AG04449 (cell line): ENCODE measurements at regions of chr3 and their contacts with region 1.

Region 1: DNA sequence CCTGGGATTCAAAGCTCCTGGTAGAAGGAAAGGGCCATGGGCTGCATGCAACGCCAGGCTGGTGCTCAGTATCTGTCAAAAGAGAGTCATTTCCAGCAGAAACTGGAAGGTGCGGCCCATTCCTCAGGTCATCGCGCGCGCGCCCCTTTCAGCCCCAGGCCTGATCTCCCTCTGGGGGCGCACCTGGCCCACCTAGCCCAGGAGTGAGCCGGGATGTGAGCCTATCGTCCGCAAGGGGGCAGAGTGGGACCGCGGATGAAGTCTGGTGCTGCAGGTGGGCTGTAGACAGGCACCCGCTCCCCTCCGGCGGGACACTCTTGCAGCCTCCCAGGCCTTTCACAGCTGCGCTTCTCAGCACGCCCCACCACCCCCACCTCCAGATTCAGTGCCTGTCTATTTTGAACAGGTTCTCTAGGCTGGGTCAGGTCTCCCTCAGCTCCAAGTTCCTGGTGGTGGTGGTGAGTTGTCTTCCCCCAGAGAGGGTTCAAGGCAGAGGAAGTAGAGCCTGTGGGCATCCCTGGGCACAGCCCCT is 5.8 kb upstream of the RPL29 start:
- DNase-seq: no peak
- H3K4me3 ChIP-seq: no peak overlapping the region
- CTCF ChIP-seq: peak; percentile 96

Region 2: DNA sequence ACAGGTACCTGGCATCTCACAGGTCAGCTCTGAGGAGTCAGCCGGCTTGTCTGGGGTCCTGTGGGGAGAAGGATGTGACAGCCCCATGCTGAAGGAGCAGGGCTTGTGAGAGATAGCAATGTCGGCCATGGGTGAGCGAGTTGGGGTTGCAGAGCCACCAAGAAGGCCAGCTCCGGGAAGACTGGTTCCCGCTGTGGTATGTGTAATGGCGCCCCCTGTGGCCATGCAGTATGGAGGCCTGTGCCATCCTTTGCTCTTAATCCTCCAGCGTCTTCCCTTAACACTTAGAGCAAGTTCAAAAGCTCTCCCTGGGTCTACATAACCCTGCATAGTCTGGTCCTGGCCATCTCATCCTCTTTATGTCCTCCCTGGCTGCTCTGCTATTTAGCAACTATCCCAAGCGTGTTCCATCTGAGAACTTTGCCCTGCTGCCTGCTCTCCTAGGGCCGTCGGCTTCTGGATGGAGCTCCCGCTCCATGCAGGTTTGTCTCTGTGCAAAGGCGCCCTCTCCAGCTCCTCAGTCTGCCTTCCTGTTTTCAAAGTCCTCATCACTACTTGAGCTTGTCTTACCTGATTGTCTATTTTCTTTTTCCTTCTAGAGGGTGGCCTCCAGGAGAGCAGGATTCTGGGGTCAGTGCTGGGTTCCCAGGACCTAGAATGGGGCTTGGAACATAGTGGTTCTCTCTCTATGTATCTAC is 181.7 kb before region 1 on chr3:
- CTCF ChIA-PET with region 1: no interaction called
- POLR2A ChIA-PET with region 1: no interaction called
- DNase-seq: no peak
- H3K4me3 ChIP-seq: no peak overlapping the region
- CTCF ChIP-seq: no peak

Region 3: DNA sequence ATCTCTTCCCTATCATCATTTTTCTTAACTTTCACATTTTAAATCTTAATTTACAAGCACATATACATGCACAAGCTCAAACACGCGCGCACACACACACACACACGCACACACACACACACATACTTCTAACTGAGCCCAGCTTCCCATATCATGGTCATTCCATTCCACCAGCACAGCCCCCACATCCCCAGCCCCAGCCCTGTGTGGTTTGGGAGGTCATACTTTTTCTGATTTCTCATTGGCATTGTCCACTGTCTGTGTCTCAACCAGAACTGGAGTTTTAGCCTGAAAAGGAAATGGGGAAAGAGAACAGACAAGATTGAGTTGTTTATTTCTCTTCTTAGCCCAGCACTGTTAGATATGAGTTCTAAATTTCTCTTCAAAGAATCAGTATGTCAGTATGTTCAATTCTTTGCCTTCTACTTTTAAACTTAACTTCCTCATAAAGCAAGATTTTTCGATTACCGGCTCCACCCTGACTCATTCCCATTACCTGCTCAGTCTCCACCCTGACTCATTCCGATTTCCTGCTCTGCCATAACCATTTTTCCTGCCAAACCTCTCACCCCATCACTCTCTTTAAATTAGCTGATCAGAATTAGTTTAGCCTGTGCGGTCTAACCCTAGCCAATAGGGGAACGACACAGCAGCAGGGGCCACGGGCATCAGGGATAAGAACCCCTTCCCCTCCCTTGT is 104.8 kb before region 1 on chr3:
- CTCF ChIA-PET with region 1: no interaction called
- POLR2A ChIA-PET with region 1: no interaction called
- DNase-seq: no peak
- H3K4me3 ChIP-seq: no peak overlapping the region
- CTCF ChIP-seq: no peak

Region 4: DNA sequence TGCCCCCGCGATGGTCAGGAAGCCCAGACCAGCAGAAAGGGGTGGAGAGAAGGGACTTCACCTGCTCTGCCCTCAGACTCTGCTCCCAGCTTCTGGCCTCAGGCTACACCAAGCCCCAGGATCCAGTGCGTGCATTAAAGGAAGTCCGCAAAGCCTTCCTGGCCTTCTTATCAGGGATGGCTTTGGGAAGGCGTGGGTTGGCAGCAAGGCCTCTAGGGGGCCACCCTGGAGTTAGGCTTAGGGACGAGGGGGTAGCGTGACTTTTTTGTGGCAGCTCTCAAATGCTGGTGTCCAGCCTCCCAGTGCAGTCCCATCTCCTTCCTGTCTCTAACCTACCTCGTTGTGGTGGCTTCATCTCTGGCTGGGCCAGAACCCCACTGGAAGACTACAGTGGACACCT is 13.1 kb after region 1 on chr3:
- CTCF ChIA-PET with region 1: interaction called, 99 read pairs
- POLR2A ChIA-PET with region 1: no interaction called
- DNase-seq: no peak
- H3K4me3 ChIP-seq: no peak overlapping the region
- CTCF ChIP-seq: peak; percentile 49

Region 5: DNA sequence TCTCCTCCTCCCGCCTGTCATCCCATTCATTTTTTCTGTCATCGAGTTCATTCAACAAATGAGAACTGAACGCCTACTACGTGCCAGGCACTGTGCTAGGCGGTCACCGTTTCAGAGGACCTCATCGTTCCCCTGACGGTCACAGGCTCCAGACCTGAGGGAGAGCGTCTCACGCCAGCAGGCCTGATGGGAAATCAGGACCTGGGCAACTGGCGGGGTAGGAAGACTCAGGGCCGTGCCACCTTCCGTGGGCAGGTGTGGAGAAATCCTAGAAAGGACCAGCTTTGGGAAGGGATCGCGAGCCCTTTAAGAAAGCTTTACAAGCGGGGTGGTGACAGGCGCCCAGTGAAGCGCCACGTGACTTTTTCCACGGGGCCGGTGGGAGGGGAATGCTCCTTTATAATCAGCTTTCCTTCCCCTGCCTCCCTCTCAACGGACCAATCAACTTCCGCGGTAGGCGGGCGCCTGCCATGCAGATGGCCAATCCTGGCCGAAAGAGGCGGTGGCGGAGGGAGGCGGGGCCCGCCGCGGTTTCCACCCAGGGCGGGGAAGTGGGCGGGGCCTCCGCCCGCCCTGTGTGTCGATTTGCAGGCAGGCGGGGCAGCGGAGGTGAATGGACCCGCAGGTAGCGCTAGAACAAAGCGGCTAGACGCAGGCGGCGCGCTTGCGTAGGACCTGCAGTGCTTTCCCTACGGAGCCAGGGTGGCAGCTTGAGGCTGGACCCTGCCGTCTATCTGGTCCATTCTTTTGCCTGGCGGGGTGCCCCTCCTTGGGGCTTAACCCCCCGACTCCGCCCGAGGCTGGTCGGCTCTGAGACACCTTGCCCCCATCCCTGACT is 55.7 kb after region 1 on chr3:
- CTCF ChIA-PET with region 1: interaction called, 160 read pairs
- POLR2A ChIA-PET with region 1: interaction called, 8 read pairs
- DNase-seq: peak; percentile 86
- H3K4me3 ChIP-seq: peak overlapping the region; percentile 72
- CTCF ChIP-seq: no peak

Region 6: GRCh38 chr3:52123106-52123725 is 121.7 kb after region 1 on chr3:
- CTCF ChIA-PET with region 1: interaction called, 779 read pairs
- POLR2A ChIA-PET with region 1: no interaction called
- DNase-seq: no peak
- H3K4me3 ChIP-seq: no peak overlapping the region
- CTCF ChIP-seq: peak; percentile 98

Region 7: GRCh38 chr3:52154117-52155094 is 152.9 kb after region 1 on chr3 and contains the start of gene POC1A:
- CTCF ChIA-PET with region 1: interaction called, 725 read pairs
- POLR2A ChIA-PET with region 1: interaction called, 4 read pairs
- DNase-seq: peak; percentile 91
- H3K4me3 ChIP-seq: peak within 1 kb of the TSS; percentile 90
- CTCF ChIP-seq: no peak